Endothelial cell of umbilical vein (primary cell): ENCODE measurements at regions of chr4 and their contacts with region 1.

Region 1: GRCh38 chr4:39638354-39639240 is at the start of gene SMIM14:
- DNase-seq: peak; percentile 98
- H3K4me3 ChIP-seq: peak within 1 kb of the TSS; percentile 66 to 97 (median 69)
- H3K27ac ChIP-seq: peak within 1 kb of the TSS; percentile 89
- H3K4me1 ChIP-seq: peaks cover 9% of the 10 kb centered on the region
- H3K27me3 ChIP-seq: no peaks in the 10 kb centered on the region
- CTCF ChIP-seq: peak in 1 of 2 donors; percentile 7
- POLR2A ChIP-seq: peak; percentile 94
- total RNA-seq, gene SMIM14: 15.1 and 15.4 TPM in 2 replicates

Region 2: DNA sequence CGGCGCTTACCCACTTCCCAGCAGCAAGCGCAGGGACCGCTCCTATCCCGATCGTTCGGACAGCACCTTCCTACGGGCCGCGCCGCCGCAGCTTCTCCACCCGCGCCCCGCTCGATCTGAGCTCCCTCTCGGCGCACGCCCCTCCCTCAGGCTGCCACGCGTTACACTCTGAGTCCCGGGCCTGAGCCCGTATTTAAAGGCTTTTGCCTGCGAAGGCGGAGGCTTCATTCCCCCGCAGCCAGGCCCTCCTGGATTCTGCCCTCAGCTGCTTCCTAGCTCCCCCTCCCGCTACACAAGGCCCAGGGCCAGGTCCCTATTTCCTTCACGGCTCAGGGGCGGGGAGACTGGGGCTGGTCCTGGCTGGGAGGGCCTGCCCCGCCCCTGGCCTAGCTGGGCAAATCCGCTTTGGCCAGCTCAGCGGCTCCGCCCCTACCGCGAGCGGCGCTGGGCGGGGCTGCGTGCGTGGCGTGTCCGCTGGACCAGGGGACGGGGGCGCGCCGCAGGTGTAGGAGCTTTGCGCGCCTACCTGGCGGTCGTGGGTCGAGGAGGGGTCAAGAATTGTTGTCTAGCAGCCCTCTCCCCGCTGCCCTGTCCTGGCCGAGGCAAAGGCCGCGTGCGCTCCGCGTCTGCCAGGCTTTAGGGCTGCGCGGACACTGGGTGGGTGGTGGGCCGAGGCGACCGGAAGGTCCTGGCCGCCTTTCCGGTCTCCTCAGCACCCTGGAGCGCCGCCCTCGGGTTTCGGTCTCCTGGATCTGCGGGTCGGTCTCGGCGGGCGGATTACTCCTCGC is 111.1 kb before region 1 on chr4 and contains the start of gene UGDH:
- CTCF ChIA-PET with region 1: interaction called, 11 read pairs
- POLR2A ChIA-PET with region 1: interaction called, 42 read pairs
- dilution Hi-C with region 1: no loop called
- intact Hi-C with region 1: loop called (anchors 1 kb)
- DNase-seq: peak; percentile 98
- H3K4me3 ChIP-seq: peak within 1 kb of the TSS; percentile 50 to 92 (median 60)
- H3K27ac ChIP-seq: peak within 1 kb of the TSS; percentile 90
- H3K4me1 ChIP-seq: peaks cover 12% of the 10 kb centered on the region
- H3K27me3 ChIP-seq: no peaks in the 10 kb centered on the region
- CTCF ChIP-seq: no peak
- POLR2A ChIP-seq: peak; percentile 97
- total RNA-seq, gene UGDH: 62.1 and 69.7 TPM in 2 replicates

Region 3: DNA sequence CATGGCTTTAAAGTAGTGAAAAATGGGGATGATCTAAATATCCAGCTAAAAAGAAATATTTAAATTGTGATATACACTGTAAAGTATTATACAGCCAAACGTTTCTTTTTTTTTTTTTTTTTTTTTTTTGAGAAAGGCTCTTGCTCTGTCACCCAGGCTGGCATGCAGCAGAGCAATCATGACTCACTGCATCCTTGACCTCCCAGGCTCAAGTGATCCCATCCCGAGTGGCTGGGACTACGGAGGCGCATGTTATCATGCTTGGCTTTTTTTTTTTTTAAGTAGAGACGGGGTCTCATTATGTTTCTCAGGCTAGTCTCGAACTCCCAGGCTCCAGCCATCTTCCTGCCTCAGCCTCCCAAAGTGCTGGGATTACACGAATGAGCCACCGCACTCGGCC is 17.0 kb before region 1 on chr4:
- CTCF ChIA-PET with region 1: interaction called, 6 read pairs
- POLR2A ChIA-PET with region 1: interaction called, 5 read pairs
- dilution Hi-C with region 1: no loop called
- intact Hi-C with region 1: loop called (anchors 2 kb)
- DNase-seq: peak; percentile 72
- H3K4me3 ChIP-seq: no peak overlapping the region
- H3K27ac ChIP-seq: peak overlapping the region; percentile 72
- H3K4me1 ChIP-seq: peaks cover 37% of the 10 kb centered on the region
- H3K27me3 ChIP-seq: no peaks in the 10 kb centered on the region
- CTCF ChIP-seq: no peak
- POLR2A ChIP-seq: no peak

Region 4: GRCh38 chr4:39657465-39657864 is 18.9 kb after region 1 on chr4:
- CTCF ChIA-PET with region 1: interaction called, 10 read pairs
- POLR2A ChIA-PET with region 1: no interaction called
- dilution Hi-C with region 1: no loop called
- intact Hi-C with region 1: no loop called
- DNase-seq: no peak
- H3K4me3 ChIP-seq: no peak overlapping the region
- H3K27ac ChIP-seq: no peak overlapping the region
- H3K4me1 ChIP-seq: no peaks in the 10 kb centered on the region
- H3K27me3 ChIP-seq: no peaks in the 10 kb centered on the region
- CTCF ChIP-seq: no peak
- POLR2A ChIP-seq: no peak

Region 5: DNA sequence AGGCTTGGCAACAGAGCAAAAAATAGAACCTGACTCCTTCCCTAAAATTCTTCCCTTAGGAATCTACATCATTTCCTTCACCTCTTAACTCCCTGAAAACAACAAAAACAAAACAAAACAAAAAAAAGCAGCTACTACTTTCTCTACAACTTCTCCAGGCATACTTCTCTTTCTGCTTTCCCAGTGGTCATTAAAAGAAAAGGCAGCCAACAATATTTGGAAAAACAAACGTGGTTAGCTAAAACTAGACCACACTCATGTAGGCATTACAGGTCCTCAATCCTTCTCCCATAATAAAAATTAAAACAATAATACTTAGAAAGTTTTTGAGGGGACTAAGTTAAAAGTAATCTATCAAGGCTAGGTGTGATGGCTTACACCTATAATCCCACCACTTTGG is 29.1 kb after region 1 on chr4:
- CTCF ChIA-PET with region 1: no interaction called
- POLR2A ChIA-PET with region 1: no interaction called
- dilution Hi-C with region 1: no loop called
- intact Hi-C with region 1: no loop called
- DNase-seq: no peak
- H3K4me3 ChIP-seq: no peak overlapping the region
- H3K27ac ChIP-seq: no peak overlapping the region
- H3K4me1 ChIP-seq: no peaks in the 10 kb centered on the region
- H3K27me3 ChIP-seq: no peaks in the 10 kb centered on the region
- CTCF ChIP-seq: no peak
- POLR2A ChIP-seq: no peak

Region 6: GRCh38 chr4:39697740-39698423 is 59.3 kb after region 1 on chr4 and contains the start of gene UBE2K:
- CTCF ChIA-PET with region 1: no interaction called
- POLR2A ChIA-PET with region 1: interaction called, 3 read pairs
- dilution Hi-C with region 1: no loop called
- intact Hi-C with region 1: loop called (anchors 2 kb)
- DNase-seq: peak; percentile 81
- H3K4me3 ChIP-seq: peak within 1 kb of the TSS; percentile 39 to 97 (median 90)
- H3K27ac ChIP-seq: peak within 1 kb of the TSS; percentile 80
- H3K4me1 ChIP-seq: peaks cover 21% of the 10 kb centered on the region
- H3K27me3 ChIP-seq: no peaks in the 10 kb centered on the region
- CTCF ChIP-seq: no peak
- POLR2A ChIP-seq: peak; percentile 84
- total RNA-seq, gene UBE2K: 90.3 and 97.8 TPM in 2 replicates

Region 7: DNA sequence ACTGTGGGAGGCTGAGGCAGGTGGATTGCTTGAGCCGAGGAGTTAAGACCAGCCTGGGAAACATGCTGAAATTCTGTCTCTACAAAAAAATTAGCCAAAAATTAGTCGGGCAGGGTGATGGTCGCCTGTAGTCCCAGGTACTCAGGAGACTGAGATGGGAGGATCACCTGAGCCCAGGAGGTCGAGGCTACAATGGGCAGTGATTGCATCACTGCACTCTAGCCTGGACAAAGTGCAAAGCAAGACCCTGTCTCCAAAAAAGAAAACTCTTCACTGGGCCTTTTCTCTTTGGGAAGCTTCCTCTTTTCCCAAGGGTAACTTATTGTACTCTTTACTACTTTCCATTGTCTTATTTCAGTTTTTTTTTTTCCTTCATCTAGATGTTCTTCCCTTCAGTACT is 148.2 kb after region 1 on chr4:
- CTCF ChIA-PET with region 1: no interaction called
- POLR2A ChIA-PET with region 1: no interaction called
- dilution Hi-C with region 1: no loop called
- intact Hi-C with region 1: no loop called
- DNase-seq: no peak
- H3K4me3 ChIP-seq: no peak overlapping the region
- H3K27ac ChIP-seq: no peak overlapping the region
- H3K4me1 ChIP-seq: no peaks in the 10 kb centered on the region
- H3K27me3 ChIP-seq: no peaks in the 10 kb centered on the region
- CTCF ChIP-seq: no peak
- POLR2A ChIP-seq: no peak

Region 8: DNA sequence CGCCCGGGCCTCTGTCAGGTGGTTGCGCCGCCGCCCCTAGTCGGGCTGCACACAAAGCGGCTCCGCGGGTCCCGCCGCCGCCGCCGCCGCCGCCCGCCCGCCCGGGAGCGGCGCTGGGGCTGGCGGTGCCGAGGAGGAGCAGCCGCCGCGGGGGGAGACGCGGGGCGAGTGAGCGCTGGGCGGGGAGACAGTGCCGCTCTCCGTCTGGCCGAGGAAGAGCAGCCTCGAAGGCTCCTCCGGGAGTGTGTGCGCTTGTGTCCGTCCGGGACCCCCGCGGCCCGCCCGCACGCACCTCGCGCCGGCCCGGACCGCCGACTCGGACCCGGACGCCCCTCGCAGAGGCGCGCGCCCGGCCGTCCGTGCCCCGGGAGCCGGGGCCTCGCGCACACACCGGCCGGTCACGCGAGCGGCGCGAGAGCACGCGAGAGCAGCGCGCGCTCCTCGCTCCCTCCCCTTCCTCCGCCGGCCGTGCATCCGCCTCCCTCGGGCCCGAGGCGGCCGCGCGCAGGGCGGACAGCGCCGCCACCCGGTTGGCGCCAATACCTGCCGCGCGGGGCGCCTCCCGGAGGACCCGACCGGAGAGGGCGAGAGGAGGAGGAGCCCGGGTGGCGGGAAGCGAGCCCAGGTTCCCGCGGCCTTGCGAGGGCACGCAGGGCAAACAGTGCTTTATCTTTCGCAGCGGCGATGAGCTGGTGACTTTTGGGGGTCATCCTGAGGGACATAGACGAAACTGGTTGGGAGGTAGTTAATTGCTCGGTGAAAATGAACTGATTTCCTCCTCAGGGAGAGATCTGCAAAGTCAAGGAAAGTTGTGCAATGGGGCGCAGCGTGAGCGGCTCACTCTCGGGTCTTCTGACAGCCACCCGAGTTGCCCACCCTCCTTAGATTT is 339.1 kb after region 1 on chr4 and contains the start of gene PDS5A:
- CTCF ChIA-PET with region 1: no interaction called
- POLR2A ChIA-PET with region 1: interaction called, 4 read pairs
- dilution Hi-C with region 1: no loop called
- intact Hi-C with region 1: loop called (anchors 1 kb)
- DNase-seq: peak; percentile 88
- H3K4me3 ChIP-seq: peak within 1 kb of the TSS; percentile 62 to 83 (median 67)
- H3K27ac ChIP-seq: peak within 1 kb of the TSS; percentile 74
- H3K4me1 ChIP-seq: peaks cover 15% of the 10 kb centered on the region
- H3K27me3 ChIP-seq: no peaks in the 10 kb centered on the region
- CTCF ChIP-seq: peak; percentile 77 to 95
- POLR2A ChIP-seq: peak; percentile 78
- total RNA-seq, gene PDS5A: 77.8 and 80.8 TPM in 2 replicates